ENCODE measurements at regions of chr14 and their contacts with region 1.

Region 1: GRCh38 chr14:34496679-34497513 is 34.9 kb upstream of the SPTSSA start:
- DNase-seq: peak; percentile 85
- ATAC-seq: peak; percentile 91
- H3K4me3 ChIP-seq: peak overlapping the region in 1 of 2 experiments; percentile 39; a peak in 2 of 4 replicates
- H3K27ac ChIP-seq: peak overlapping the region; percentile 75
- H3K4me1 ChIP-seq: peaks cover 15% of the 10 kb centered on the region
- H3K27me3 ChIP-seq: no peaks in the 10 kb centered on the region
- CTCF ChIP-seq: no peak

Region 2: DNA sequence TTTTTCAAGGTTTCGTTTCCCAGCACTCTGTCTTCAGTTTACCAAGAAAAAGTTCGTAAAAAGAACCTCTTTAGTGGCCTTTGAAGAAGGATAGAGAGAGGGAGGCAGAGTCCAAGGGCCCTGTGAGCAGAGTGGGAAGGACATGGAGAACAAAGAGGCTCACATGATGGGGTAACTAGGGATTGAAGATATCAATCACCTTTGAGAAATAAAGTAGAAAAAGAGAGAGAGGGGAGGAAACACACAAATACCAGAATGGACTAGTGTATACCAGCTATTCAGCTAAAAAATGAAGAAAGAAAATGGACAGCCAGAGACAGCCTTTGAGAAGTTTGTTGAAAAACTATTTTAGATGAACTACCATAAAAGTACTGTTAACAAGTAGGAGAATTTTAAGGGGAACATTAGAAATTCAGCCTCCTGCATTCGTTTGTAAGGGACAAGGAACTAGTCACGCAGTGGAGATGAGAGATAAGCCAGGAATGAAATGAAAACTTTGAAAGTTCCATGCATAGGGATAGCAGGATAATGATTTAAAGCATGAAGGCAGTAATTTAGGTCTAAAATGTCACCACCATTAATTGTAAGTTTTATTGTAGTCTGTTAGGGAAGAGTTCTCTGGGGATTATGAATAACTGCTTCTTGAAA is 117.0 kb before region 1 on chr14:
- CTCF ChIA-PET with region 1: no interaction called
- POLR2A ChIA-PET with region 1: no interaction called
- in situ Hi-C with region 1: no loop called
- intact Hi-C with region 1: no loop called
- DNase-seq: no peak
- ATAC-seq: 0 out of 2 replicates have a peak, but pooled peaks have one; percentile 26
- H3K4me3 ChIP-seq: 0 out of 4 replicates have a peak overlapping the region, but pooled peaks of 1 of the 2 experiments have one; percentile 4
- H3K27ac ChIP-seq: 0 out of 2 replicates have a peak overlapping the region, but pooled peaks have one; percentile 21
- H3K4me1 ChIP-seq: no peaks in the 10 kb centered on the region
- H3K27me3 ChIP-seq: no peaks in the 10 kb centered on the region
- CTCF ChIP-seq: no peak

Region 3: GRCh38 chr14:34482468-34482867 is 14.4 kb before region 1 on chr14:
- CTCF ChIA-PET with region 1: no interaction called
- POLR2A ChIA-PET with region 1: interaction called, 13 read pairs
- in situ Hi-C with region 1: no loop called
- intact Hi-C with region 1: no loop called
- DNase-seq: no peak
- ATAC-seq: no peak
- H3K4me3 ChIP-seq: no peak overlapping the region
- H3K27ac ChIP-seq: no peak overlapping the region
- H3K4me1 ChIP-seq: no peaks in the 10 kb centered on the region
- H3K27me3 ChIP-seq: no peaks in the 10 kb centered on the region
- CTCF ChIP-seq: no peak

Measured in Panc1 (cell line).